Body of pancreas (tissue), 4 donors: ENCODE measurements at regions of chr12 and their contacts with region 1.

Region 1: GRCh38 chr12:46282829-46283228 is 14.0 kb upstream of the SLC38A1 start:
- DNase-seq: no peak
- ATAC-seq: no peak
- H3K4me3 ChIP-seq: no peak overlapping the region
- H3K27ac ChIP-seq: no peak overlapping the region
- H3K4me1 ChIP-seq: no peaks in the 10 kb centered on the region
- H3K27me3 ChIP-seq: no peaks in the 10 kb centered on the region
- CTCF ChIP-seq: no peak
- POLR2A ChIP-seq: no peak

Region 2: DNA sequence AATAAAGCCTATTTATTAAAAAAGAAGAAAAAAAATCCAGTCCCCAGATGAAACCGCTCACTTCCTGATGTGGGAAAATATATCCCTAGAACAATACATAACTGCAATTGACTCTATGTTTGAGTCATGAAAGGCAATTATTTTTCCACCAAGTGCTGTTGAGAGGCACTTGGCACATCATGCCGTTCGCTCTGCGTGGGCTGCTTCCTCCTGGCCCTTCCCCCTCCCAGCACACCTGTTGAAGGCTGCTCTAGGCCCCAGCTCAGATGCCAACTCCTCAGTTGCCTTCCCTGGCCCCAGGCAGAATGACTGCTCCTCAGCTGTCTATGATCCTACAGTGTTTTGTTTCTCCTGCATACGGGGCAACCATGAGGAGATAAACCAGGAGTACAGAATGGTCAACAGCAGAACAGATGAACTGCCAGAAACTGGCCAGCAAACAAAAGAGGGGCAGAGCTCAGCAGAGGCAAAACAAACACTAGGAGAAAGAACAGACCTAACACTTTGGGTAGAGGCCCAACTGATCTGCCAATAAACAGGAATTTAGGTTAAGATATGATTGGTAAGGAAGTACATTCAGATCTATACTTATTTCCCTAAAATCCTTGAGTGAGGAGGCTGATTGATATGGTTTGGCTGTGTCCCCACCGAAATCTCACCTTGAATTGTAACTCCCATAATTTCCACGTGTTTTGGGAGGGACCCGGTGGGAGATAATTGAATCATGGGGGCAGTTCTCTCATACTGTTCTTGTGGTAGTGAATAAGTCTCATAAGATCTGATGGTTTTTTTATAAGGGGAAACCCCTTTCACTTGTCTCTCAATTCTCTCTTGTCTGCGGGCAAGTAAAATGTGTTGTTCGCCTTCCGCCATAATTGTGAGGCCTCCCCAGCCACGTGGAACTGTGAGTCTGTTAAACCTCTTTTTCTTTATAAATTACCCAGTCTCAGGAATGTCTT is 72.6 kb before region 1 on chr12:
- intact Hi-C with region 1: loop called (anchors 10 kb)
- DNase-seq: peak; percentile 84 to 92 (median 88)
- ATAC-seq: peak; percentile 96
- H3K4me3 ChIP-seq: no peak overlapping the region
- H3K27ac ChIP-seq: peak overlapping the region; percentile 61 to 78 (median 68)
- H3K4me1 ChIP-seq: peaks cover 35% of the 10 kb centered on the region
- H3K27me3 ChIP-seq: no peaks in the 10 kb centered on the region
- CTCF ChIP-seq: peak in 1 of 7 experiments; percentile 10
- POLR2A ChIP-seq: peak in 2 of 3 donors; percentile 51 to 53

Region 3: DNA sequence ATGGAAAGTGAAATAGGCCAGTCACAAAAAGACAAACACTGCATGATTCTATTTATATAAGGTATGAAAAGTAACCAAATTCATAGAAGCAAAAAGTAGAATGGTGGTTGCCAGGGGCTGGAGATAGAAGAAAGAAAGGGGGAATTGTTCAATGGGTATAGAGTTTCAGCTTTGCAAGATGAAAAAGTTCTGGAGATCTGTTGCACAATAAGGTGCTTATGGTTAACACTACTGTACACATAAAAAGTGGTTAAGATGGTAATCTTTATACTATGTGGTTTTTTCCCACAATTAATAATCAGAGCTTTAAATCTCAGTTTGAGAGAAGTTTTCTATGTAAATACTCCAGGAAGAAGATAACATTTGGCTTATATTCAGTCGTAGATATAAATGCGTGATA is 469.6 kb after region 1 on chr12:
- intact Hi-C with region 1: no loop called
- DNase-seq: no peak
- ATAC-seq: no peak
- H3K4me3 ChIP-seq: no peak overlapping the region
- H3K27ac ChIP-seq: no peak overlapping the region
- H3K4me1 ChIP-seq: no peaks in the 10 kb centered on the region
- H3K27me3 ChIP-seq: no peaks in the 10 kb centered on the region
- CTCF ChIP-seq: no peak
- POLR2A ChIP-seq: no peak